ENCODE measurements at regions of chr11 and their contacts with region 1.

Region 1: GRCh38 chr11:10808553-10809372 is at the start of gene EIF4G2:
- DNase-seq: peak; percentile 94
- H3K4me3 ChIP-seq: peak within 1 kb of the TSS; percentile 98
- H3K27me3 ChIP-seq: no peaks in the 10 kb centered on the region
- CTCF ChIP-seq: 0 out of 2 replicates have a peak, but pooled peaks have one; percentile 1
- polyA plus RNA-seq, gene EIF4G2: 472 and 1,009 TPM in 2 replicates

Region 2: GRCh38 chr11:10784232-10785145 is 24.3 kb before region 1 on chr11:
- CTCF ChIA-PET with region 1: no interaction called
- POLR2A ChIA-PET with region 1: no interaction called
- DNase-seq: no peak
- H3K4me3 ChIP-seq: no peak overlapping the region
- H3K27me3 ChIP-seq: no peaks in the 10 kb centered on the region; the same call in 1 of the 2 replicates
- CTCF ChIP-seq: no peak

Region 3: GRCh38 chr11:10857709-10858438 is 49.1 kb after region 1 on chr11 and contains the start of gene ZBED5:
- CTCF ChIA-PET with region 1: interaction called, 4 read pairs
- POLR2A ChIA-PET with region 1: interaction called, 12 read pairs
- DNase-seq: peak; percentile 85
- H3K4me3 ChIP-seq: peak within 1 kb of the TSS; percentile 94
- H3K27me3 ChIP-seq: no peaks in the 10 kb centered on the region
- CTCF ChIP-seq: peak; percentile 27; the same call in 1 of the 2 replicates
- polyA plus RNA-seq, gene ZBED5: 43.0 and 75.4 TPM in 2 replicates

Region 4: DNA sequence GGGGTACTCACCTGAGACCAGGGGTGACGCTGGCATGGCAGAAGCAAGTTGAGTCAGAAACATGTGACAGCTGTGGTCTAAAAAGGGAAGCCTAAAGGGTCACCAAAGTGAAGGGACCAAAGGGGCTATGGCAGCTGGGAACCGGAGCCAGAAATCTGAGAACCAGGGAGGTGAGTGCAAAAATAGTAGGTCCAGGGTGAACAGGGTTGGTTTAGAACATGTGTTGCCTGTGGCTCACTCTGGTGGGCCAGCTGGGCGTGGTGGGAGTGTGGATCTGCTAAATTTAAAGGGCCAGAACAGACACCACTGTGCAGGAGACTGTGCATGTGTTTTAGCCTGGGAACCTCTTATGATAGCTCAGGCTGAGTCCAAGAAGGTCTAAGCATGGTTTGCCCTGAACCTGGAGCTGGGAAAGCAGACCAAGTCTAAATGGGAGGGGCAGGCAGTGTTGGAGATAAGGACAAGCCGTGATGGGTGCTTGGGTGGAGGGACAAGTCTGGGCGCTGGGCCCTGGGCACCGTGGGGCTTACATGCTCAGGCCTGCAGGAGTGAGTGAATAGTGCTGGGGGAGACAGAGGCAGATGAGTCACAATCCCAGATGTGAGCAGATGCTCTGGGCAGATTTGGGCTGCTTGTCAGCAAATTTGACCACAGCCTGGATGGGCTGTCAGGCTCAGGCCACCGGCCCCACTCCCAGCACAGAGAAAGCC is 90.5 kb after region 1 on chr11:
- CTCF ChIA-PET with region 1: interaction called, 8 read pairs
- POLR2A ChIA-PET with region 1: interaction called, 24 read pairs
- DNase-seq: no peak
- H3K4me3 ChIP-seq: no peak overlapping the region
- H3K27me3 ChIP-seq: no peaks in the 10 kb centered on the region
- CTCF ChIP-seq: no peak

Region 5: DNA sequence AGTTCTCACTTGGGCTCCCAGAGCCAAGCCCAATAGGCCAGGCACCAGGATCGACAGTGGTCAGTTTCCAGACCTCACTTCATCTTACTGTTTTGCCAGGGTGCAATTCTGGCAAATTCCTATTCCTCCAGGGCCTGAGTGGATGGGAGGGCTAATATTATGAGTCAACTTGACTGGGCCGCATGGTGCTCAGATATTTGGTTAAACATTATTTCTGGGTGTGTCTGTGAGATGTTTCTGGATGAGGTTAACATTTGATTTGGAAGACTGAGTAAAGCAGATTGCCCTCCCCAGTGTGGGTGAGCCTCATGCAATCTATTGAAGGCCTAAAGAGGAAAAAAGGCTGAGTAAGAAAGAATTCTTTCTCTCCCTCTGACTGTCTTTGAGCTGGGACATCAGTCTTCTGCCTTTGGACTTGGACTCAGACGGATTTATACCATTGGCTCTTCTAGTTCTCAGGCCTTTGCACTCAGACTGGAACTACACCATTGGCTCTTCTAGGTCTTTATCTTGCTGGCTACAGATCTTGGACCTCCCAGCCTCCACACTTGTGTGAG is 182.0 kb after region 1 on chr11:
- CTCF ChIA-PET with region 1: no interaction called
- POLR2A ChIA-PET with region 1: no interaction called
- DNase-seq: no peak
- H3K4me3 ChIP-seq: no peak overlapping the region
- H3K27me3 ChIP-seq: peaks cover 7% of the 10 kb centered on the region
- CTCF ChIP-seq: no peak

Measured in BJ (cell line).